Activated T-helper 2 cell treated with anti-CD3 and anti-CD28 coated beads, Interferon-gamma antibody, Interleukin-2, Interleukin-4, amounts not matched to agents 10 μg/mL and 5 μg/mL and 100 μg/mL, durations not matched to agents 14 hours and 24 hours and 36 hours (primary cell): ENCODE measurements at regions of chr20 and their contacts with region 1.

Region 1: DNA sequence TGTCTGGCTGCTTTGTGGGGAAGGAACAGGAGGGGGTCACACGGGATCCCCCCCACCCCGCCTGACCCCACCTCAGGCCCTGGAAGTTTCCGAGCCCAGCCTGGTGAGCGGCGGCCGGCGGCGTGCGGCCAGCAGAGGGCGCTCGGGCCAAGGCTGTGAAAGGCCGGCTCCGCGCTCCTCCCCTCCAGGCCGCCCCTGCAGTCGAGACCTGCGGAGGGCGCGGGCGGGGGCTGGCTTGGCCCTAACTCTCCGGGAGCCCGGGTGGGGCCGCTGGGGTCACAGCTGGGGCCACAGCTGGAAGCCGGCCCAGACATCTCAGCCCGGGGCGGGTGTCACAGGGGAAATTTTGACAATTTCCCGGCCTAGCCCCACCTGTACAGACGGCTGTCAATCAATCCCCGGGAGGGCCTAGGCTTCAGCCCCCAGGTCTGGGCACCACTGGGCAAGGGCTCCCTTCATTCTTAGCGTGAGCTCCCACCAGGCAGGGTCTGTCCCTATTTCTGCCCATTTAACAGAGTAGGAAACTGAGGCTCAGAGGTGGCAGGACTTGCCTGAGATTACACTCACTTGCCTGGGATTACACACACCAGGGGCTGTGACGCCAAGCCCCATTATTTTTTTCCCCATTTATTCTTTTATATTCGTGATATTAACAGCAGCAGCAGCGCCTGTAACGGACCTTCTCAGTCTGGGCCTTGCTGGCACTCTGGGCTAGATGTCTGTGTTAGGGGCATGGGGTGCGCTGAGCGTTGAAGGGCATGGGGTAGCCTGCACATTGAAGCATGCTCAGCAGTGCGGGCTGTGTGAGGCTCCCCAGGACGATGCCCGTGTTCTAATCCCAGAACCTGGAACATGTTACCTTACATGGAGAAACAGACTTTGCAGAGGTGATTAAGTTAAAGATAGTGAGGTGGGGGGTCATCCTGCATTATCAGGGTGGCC is 23.0 kb downstream of the ZBP1 start:
- DNase-seq: peak; percentile 59
- H3K4me3 Mint-ChIP-seq: no peak overlapping the region
- H3K27ac Mint-ChIP-seq: no peak overlapping the region
- H3K4me1 Mint-ChIP-seq: peaks cover 8% of the 10 kb centered on the region
- H3K27me3 Mint-ChIP-seq: peaks cover 22% of the 10 kb centered on the region

Region 2: GRCh38 chr20:57089691-57090150 is 507.5 kb before region 1 on chr20:
- intact Hi-C with region 1: loop called (anchors 5 kb)
- DNase-seq: peak; percentile 47
- H3K4me3 Mint-ChIP-seq: no peak overlapping the region
- H3K27ac Mint-ChIP-seq: no peak overlapping the region
- H3K4me1 Mint-ChIP-seq: peaks cover 10% of the 10 kb centered on the region
- H3K27me3 Mint-ChIP-seq: peaks cover 3% of the 10 kb centered on the region

Region 3: GRCh38 chr20:57493091-57493615 is 104.1 kb before region 1 on chr20:
- intact Hi-C with region 1: no loop called
- DNase-seq: no peak
- H3K4me3 Mint-ChIP-seq: no peak overlapping the region
- H3K27ac Mint-ChIP-seq: no peak overlapping the region
- H3K4me1 Mint-ChIP-seq: peaks cover 6% of the 10 kb centered on the region
- H3K27me3 Mint-ChIP-seq: peaks cover 42% of the 10 kb centered on the region

Region 4: DNA sequence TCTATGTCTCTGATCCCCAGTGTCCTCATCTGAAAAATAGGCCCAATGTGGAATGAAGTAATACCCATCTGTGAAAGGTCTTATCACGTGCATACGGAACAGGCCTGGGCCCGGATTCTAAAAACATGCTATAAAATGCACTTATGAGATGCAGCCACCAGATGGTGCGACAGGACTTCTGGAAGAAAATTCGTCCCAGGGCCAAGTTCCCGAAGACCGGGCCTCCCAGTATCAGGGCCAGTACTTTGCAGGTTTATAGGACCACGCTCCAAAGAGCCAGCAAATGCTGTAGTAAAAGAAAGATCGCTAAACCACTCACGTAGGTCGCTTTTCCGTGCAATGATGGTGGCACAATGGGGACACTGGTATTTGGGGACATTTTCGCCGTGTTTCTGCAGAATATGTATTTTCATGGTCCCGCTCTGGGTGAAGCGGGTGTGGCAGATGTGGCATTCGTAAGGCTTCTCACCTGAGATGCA is 83.0 kb before region 1 on chr20:
- intact Hi-C with region 1: loop called (anchors 1 kb)
- DNase-seq: no peak
- H3K4me3 Mint-ChIP-seq: no peak overlapping the region
- H3K27ac Mint-ChIP-seq: no peak overlapping the region
- H3K4me1 Mint-ChIP-seq: no peaks in the 10 kb centered on the region
- H3K27me3 Mint-ChIP-seq: peaks cover 9% of the 10 kb centered on the region

Region 5: DNA sequence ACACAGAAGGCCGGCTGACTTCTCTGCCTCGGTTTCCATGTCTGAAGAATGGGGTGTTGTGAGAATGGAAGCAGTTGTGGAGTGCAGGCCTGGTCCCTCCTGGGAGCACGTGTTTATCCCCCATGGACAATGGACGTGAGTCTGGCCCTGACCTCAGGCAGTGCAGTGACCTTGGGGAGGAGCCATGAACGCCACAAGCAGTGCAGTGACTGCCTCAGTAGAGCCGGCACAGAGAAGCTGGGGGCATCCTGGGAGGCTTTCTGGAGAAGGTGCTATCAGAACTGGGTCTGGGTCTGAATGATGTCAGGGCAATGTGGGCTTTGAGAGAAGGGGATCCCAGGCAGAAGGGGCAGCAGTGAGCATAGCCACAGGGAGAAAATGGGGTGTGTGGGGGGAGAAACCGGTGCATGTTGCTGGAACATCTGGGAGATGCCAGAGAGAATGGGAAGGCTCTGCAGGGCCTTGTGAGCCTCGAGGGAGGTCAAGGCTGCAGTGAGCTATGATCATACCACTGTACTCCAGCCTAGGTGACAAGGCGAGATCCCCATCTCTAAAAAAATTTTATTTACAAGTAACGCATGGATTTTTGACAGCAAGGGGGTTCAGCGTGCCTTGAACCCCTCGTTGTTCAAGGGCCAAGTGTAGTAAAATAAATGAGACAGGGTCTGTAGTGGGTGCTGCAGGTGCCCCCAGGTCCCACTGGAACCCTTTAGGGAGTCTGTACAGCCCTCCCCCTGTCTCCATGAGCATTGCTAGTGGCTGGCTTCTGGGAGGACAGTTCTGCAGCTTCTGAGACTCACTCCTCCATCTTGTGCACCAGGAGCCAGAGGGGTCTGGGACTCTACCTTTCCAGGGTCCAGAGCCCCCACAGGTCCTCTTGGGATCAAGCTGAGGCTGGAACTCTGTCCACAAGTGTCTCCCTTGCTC is 50.0 kb after region 1 on chr20:
- intact Hi-C with region 1: no loop called
- DNase-seq: no peak
- H3K4me3 Mint-ChIP-seq: no peak overlapping the region
- H3K27ac Mint-ChIP-seq: no peak overlapping the region
- H3K4me1 Mint-ChIP-seq: no peaks in the 10 kb centered on the region
- H3K27me3 Mint-ChIP-seq: peaks cover 35% of the 10 kb centered on the region

Region 6: DNA sequence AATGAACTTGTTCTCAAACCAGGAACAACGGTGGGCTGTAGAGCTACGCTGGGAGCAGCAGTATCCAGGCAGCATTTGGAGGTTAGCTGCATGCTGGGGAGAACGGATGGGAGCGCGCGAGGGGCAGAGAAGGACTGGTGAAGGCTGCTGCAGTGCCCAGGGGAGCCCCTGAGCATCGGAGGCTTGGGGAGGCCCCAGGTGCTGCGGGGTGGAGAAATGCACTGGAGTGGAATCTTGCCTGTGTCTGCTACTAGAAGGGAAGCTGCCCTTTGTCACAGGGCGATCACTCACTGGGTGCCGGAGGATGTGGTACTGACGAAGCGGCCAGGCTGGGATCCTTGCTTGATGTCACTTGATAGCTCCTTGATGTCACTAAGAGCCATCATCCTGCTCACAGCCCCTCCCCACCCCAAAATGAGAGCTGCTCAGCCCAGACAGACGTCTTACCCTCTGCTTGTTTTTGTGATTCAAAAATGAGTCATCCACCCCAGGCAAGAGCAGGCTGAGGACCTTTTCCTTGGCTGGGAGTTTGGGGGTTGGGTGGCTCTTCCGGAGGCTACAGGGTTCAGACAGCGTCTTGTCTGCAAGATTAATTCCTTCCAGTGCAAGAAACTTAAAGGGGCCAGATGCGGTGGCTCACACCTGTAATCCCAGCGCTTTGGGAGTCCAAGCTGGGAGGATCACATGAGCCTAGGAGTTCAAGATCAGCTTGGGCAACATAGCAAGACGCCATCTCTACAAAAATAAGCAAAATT is 175.2 kb after region 1 on chr20:
- intact Hi-C with region 1: loop called (anchors 10 kb)
- DNase-seq: peak; percentile 10
- H3K4me3 Mint-ChIP-seq: no peak overlapping the region
- H3K27ac Mint-ChIP-seq: no peak overlapping the region
- H3K4me1 Mint-ChIP-seq: peaks cover 10% of the 10 kb centered on the region
- H3K27me3 Mint-ChIP-seq: peaks cover 16% of the 10 kb centered on the region

Region 7: DNA sequence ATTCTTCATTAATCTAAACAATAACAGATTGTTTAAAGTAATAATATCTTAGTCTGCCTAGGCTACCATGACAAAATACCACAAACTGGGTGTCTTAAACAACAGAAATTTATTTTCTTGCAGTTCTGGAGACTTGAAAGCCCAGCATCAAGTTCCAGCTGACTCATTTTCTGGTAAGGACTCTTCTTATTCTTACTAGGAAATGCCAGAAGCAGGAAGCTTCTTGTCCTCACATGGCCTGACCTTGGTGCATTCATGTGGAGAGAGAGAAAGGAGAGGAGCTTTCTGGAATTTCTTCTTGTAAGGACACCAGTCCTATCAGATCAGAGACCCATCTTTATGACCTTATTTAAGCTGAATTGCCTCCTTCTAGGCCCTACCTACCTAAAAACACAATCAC is 520.7 kb after region 1 on chr20:
- intact Hi-C with region 1: no loop called
- DNase-seq: no peak
- H3K4me3 Mint-ChIP-seq: no peak overlapping the region
- H3K27ac Mint-ChIP-seq: no peak overlapping the region
- H3K4me1 Mint-ChIP-seq: no peaks in the 10 kb centered on the region
- H3K27me3 Mint-ChIP-seq: peaks cover 2% of the 10 kb centered on the region

Region 8: GRCh38 chr20:58209652-58210397 is 612.6 kb after region 1 on chr20:
- intact Hi-C with region 1: loop called (anchors 5 kb)
- DNase-seq: peak; percentile 76
- H3K4me3 Mint-ChIP-seq: no peak overlapping the region
- H3K27ac Mint-ChIP-seq: no peak overlapping the region
- H3K4me1 Mint-ChIP-seq: peaks cover 4% of the 10 kb centered on the region
- H3K27me3 Mint-ChIP-seq: peaks cover 16% of the 10 kb centered on the region